A673 (cell line): ENCODE measurements at regions of chr1 and their contacts with region 1.

Region 1: DNA sequence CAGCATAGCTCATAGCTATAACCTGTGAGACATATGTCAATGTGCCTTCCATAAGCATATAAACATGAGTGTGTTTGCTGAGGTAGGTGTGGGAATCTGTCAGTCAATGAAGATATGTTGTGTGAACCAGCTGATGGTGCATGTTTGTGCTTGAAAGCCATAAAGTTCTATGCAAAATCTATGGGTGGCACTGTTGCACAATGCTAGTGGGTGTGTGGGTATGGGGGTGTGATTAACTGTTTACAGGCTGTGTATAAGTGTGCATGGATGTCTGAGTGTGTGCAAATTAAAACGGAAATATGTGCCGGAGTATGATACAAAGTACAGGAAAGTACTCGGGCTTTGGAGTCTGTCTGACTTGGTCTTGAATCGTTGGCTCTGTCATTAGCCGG is 1.0 kb upstream of the ATP2B4 start:
- DNase-seq: peak; percentile 73
- H3K4me3 ChIP-seq: peak overlapping the region; percentile 66
- H3K27ac ChIP-seq: peak overlapping the region; percentile 77
- H3K4me1 ChIP-seq: peaks cover 27% of the 10 kb centered on the region
- H3K27me3 ChIP-seq: no peaks in the 10 kb centered on the region
- CTCF ChIP-seq: peak; percentile 45

Region 2: DNA sequence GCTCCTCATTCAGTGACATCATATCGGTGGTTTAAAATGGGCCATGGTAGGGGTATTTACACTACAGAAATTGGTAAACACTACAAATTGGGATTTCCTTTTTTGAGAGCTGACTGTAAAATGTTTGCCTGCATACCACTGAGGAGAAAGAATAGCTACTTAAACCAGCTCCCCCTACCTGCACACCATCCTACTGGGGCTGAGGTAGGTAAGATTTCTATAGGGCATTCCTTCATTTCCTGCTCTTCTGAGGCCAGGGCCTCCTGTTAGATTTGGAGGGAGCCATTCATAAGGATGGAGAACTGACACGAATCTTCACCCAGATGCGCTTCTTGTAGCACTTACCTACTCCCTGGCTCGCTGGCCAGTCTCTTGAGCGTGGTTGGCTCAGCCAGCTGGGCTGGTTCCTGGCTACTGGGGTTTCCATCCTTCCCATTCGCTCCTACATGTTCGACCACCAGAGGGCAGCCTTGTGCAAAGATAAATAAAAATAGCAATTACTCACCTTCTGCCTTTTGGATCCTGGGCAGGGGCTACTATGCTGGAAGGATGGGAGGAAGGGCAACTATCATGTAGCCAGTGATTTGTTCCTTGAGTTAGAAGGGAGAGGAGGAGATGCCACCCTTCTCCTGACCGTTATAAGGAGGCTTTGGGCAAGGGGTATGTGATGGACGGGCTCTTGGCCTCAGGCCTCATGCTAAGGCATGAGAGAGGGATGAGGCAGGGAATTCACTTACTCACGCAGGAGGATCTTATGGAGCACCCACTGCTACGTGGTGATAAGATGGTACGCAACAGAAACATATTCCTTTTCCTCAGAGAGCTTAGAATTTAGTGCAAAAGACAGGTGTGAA is 121.0 kb before region 1 on chr1:
- CTCF ChIA-PET with region 1: no interaction called
- POLR2A ChIA-PET with region 1: no interaction called
- intact Hi-C with region 1: loop called (anchors 10 kb)
- DNase-seq: peak; percentile 83
- H3K4me3 ChIP-seq: no peak overlapping the region
- H3K27ac ChIP-seq: no peak overlapping the region
- H3K4me1 ChIP-seq: no peaks in the 10 kb centered on the region
- H3K27me3 ChIP-seq: no peaks in the 10 kb centered on the region
- CTCF ChIP-seq: peak; percentile 92

Region 3: DNA sequence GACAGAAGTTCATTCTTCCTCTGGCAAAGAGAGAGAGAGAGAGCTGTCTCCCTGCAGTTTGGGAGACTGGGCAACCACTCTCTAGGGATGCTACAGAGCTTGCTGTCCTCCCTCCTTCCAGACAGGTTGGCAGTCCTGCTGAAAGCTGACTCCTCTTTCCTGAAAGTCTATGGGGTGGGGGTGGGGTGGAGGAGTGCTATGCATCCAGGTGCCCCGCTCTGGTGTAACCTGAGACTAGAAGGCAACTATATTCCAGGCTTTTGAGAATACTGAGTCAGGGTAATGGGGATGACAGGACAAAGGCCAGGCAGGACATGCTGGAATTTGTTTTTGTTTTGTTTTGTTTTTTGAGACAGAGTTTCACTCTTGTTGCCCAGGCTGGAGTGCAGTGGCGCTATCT is 76.3 kb before region 1 on chr1:
- CTCF ChIA-PET with region 1: no interaction called
- POLR2A ChIA-PET with region 1: no interaction called
- intact Hi-C with region 1: loop called (anchors 10 kb)
- DNase-seq: no peak
- H3K4me3 ChIP-seq: no peak overlapping the region
- H3K27ac ChIP-seq: no peak overlapping the region
- H3K4me1 ChIP-seq: peaks cover 32% of the 10 kb centered on the region
- H3K27me3 ChIP-seq: no peaks in the 10 kb centered on the region
- CTCF ChIP-seq: no peak

Region 4: GRCh38 chr1:203695116-203695515 is 69.5 kb after region 1 on chr1:
- CTCF ChIA-PET with region 1: no interaction called
- POLR2A ChIA-PET with region 1: no interaction called
- intact Hi-C with region 1: loop called (anchors 5 kb)
- DNase-seq: peak; percentile 18
- H3K4me3 ChIP-seq: no peak overlapping the region
- H3K27ac ChIP-seq: no peak overlapping the region
- H3K4me1 ChIP-seq: peaks cover 7% of the 10 kb centered on the region
- H3K27me3 ChIP-seq: no peaks in the 10 kb centered on the region
- CTCF ChIP-seq: no peak

Region 5: GRCh38 chr1:203954788-203955566 is 329.4 kb after region 1 on chr1:
- CTCF ChIA-PET with region 1: no interaction called
- POLR2A ChIA-PET with region 1: no interaction called
- intact Hi-C with region 1: no loop called
- DNase-seq: no peak
- H3K4me3 ChIP-seq: no peak overlapping the region
- H3K27ac ChIP-seq: no peak overlapping the region
- H3K4me1 ChIP-seq: no peaks in the 10 kb centered on the region
- H3K27me3 ChIP-seq: no peaks in the 10 kb centered on the region
- CTCF ChIP-seq: no peak